GM10248 (cell line): ENCODE measurements at regions of chr7 and their contacts with region 1.

Region 1: GRCh38 chr7:117127585-117128168 is 174.4 kb downstream of the ST7 start:
- DNase-seq: no peak
- CTCF ChIP-seq: peak; percentile 70

Region 2: DNA sequence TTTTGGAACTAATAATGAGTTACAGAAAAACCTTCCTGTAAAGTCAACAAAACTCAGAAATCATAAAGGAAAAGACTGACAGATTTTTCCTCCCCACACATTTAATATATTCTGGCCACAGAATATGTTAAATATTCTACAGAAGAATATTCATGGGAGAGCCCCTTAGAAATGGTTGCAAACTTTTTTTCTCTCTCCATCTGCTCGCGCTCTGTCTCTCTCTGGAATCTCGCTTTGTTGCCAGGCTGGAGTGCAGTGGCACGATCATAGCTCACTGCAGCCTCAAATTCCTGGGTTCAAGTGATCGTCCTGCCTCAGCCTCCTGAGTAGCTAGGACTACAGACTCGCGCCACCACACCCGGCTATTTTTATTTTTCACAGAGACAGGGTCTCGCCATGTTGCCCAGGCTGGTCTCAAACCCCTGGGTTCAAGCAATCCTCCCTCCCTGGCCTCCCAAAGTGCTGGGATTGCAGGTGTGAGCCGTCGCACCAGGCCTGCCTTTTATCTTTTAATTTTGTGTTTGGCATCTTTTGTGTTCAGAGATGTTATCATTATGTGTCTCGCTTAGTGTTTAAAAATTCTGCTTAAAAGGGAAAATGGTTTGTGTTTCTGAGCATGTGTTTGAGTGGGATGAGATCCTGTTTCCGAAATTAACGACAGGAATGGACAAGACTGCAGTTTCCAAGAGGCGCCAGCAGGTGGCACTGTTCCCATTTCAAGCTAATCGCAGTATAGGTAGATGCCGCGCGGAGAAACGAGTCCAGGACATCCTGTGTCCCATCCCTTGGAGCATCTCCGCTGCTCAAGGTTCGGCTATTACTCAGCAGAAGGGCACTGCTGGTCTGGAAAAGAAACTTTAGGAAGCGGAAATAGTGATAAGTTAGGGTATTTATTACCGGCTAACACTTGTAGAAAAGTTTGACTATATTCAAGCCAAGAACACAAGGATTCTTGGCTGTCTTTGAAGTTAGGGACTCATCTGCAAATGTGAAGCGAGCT is 197.5 kb before region 1 on chr7:
- CTCF ChIA-PET with region 1: interaction called, 166 read pairs
- POLR2A ChIA-PET with region 1: no interaction called
- DNase-seq: peak; percentile 76
- CTCF ChIP-seq: peak; percentile 90

Region 3: DNA sequence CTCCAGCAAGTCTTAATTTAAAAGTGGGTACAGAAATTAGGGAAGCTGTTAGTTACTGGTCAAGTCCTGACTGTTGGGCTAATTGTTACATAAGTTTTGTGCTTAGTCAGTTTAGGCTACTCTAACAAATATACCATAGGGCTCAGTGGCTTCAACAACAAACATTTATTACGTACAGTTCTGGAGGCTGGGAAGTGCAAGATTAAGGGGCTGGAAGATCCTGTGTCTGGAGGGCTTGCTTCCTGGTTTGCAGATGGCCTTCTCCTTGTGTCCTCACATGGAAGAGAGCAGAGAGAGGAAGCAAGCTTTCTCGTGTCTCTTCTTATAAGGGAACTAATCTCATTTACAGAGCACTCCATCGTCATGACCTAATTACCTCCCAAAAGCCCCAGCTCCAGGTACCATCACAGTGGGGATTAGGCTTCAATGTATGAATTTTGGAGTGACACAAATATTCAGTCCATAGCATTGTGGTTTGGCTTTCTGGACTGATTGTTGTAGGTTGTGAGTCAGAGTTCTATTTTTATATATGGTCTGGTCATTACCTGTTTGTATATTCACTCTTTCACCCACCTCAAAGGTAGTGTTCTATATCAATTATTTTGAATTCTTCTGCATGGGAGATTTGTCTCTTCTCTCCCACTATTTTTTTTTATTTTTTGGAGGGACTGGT is 157.3 kb before region 1 on chr7:
- CTCF ChIA-PET with region 1: interaction called, 10 read pairs
- POLR2A ChIA-PET with region 1: no interaction called
- DNase-seq: no peak
- CTCF ChIP-seq: no peak

Region 4: DNA sequence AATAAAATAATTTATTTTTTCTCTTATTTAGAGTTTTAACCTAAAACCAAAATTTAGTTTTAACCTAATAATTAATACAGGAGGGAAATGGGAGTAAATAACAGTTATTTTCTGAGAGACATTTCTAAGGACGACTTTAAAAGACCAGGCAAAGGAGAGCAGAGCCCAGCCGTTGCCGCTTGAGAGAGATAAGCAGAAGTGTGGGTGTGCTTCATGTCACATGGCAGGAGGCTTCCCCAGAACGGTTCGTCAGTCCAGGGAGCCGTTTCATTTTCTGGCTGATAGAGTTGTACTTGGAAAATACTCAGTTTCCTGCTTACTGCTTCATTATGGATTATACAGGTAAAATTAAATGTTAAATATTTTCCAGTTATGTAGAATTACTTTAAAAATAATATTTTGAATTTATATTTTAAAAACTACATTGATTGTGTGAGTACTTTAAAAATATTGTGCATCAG is 113.0 kb before region 1 on chr7:
- CTCF ChIA-PET with region 1: interaction called, 90 read pairs
- POLR2A ChIA-PET with region 1: no interaction called
- DNase-seq: peak; percentile 51
- CTCF ChIP-seq: no peak

Region 5: GRCh38 chr7:117045927-117046710 is 81.6 kb before region 1 on chr7:
- CTCF ChIA-PET with region 1: interaction called, 10 read pairs
- POLR2A ChIA-PET with region 1: no interaction called
- DNase-seq: no peak
- CTCF ChIP-seq: no peak

Region 6: GRCh38 chr7:117110480-117111337 is 17.0 kb before region 1 on chr7:
- CTCF ChIA-PET with region 1: interaction called, 48 read pairs
- POLR2A ChIA-PET with region 1: no interaction called
- DNase-seq: peak; percentile 64
- CTCF ChIP-seq: no peak

Region 7: GRCh38 chr7:117140921-117141320 is 13.2 kb after region 1 on chr7:
- CTCF ChIA-PET with region 1: interaction called, 25 read pairs
- POLR2A ChIA-PET with region 1: no interaction called
- DNase-seq: no peak
- CTCF ChIP-seq: no peak